Caco-2 (cell line): ENCODE measurements at regions of chr10 and their contacts with region 1.

Region 1: GRCh38 chr10:70549962-70550458 is 52.5 kb downstream of the PRF1 start:
- DNase-seq: peak; percentile 78 to 88
- H3K4me3 ChIP-seq: no peak overlapping the region
- H3K4me3 Mint-ChIP-seq: no peak overlapping the region
- H3K27ac Mint-ChIP-seq: no peak overlapping the region
- H3K4me1 ChIP-seq: peaks cover 5% of the 10 kb centered on the region; the same call in 1 of the 2 replicates
- H3K4me1 Mint-ChIP-seq: peaks cover 16% of the 10 kb centered on the region
- H3K27me3 ChIP-seq: no peaks in the 10 kb centered on the region
- H3K27me3 Mint-ChIP-seq: no peaks in the 10 kb centered on the region
- CTCF ChIP-seq: peak; percentile 99 to 100

Region 2: DNA sequence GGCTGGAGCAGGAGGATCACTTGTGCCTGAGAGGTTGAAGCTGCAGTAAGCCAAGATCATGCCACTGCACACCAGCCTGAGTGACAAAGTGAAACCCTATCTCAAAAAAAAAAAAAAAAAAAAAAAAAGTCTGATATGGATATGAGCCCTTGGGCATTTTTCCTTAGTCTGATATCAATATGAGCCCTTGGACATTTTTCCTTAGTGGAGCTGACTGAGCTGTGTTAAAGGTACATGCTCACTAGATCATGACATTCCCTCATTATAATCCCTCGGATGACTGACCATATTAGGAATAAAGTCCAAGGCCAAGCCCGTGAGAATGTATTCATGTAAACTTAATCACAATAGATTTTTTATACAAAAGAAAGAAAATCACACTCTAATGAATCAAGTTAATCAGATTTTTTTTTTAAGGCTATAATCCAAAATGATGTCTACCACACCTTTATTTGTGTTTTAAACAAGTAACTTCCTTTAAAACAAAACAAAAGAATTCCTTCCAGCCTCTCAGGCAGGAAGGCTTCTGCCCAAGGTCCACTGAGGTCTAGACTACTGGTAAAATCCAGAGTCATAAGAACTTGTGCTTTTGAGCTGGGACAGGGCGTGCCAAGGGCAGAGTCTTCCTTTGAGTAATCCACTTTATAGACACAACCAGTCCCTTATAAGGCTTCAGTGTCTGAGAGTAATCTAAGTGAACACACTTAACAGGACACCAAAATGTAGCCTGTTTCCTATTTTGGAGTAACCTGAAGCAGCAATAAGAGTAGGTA is 322.3 kb before region 1 on chr10:
- CTCF ChIA-PET with region 1: interaction called, 4 read pairs
- POLR2A ChIA-PET with region 1: no interaction called
- intact Hi-C with region 1: loop called (anchors 10 kb)
- DNase-seq: no peak
- H3K4me3 ChIP-seq: no peak overlapping the region
- H3K4me3 Mint-ChIP-seq: no peak overlapping the region
- H3K27ac Mint-ChIP-seq: no peak overlapping the region
- H3K4me1 ChIP-seq: peaks cover 16% of the 10 kb centered on the region
- H3K4me1 Mint-ChIP-seq: peaks cover 19% of the 10 kb centered on the region
- H3K27me3 ChIP-seq: no peaks in the 10 kb centered on the region
- H3K27me3 Mint-ChIP-seq: no peaks in the 10 kb centered on the region
- CTCF ChIP-seq: no peak

Region 3: GRCh38 chr10:70672165-70673042 is 122.4 kb after region 1 on chr10 and contains the start of gene ADAMTS14:
- CTCF ChIA-PET with region 1: interaction called, 4 read pairs
- POLR2A ChIA-PET with region 1: no interaction called
- intact Hi-C with region 1: loop called (anchors 10 kb)
- DNase-seq: peak in 1 of 2 experiments; percentile 45
- H3K4me3 ChIP-seq: peak within 1 kb of the TSS; percentile 38
- H3K4me3 Mint-ChIP-seq: peak within 1 kb of the TSS; percentile 68
- H3K27ac Mint-ChIP-seq: no peak within 1 kb of the TSS
- H3K4me1 ChIP-seq: peaks cover 3% of the 10 kb centered on the region; the same call in 1 of the 2 replicates
- H3K4me1 Mint-ChIP-seq: peaks cover 7% of the 10 kb centered on the region
- H3K27me3 ChIP-seq: peaks cover 7% of the 10 kb centered on the region
- H3K27me3 Mint-ChIP-seq: peaks cover 28% of the 10 kb centered on the region
- CTCF ChIP-seq: no peak
- total RNA-seq, gene ADAMTS14: not detected in 2 replicates

Region 4: DNA sequence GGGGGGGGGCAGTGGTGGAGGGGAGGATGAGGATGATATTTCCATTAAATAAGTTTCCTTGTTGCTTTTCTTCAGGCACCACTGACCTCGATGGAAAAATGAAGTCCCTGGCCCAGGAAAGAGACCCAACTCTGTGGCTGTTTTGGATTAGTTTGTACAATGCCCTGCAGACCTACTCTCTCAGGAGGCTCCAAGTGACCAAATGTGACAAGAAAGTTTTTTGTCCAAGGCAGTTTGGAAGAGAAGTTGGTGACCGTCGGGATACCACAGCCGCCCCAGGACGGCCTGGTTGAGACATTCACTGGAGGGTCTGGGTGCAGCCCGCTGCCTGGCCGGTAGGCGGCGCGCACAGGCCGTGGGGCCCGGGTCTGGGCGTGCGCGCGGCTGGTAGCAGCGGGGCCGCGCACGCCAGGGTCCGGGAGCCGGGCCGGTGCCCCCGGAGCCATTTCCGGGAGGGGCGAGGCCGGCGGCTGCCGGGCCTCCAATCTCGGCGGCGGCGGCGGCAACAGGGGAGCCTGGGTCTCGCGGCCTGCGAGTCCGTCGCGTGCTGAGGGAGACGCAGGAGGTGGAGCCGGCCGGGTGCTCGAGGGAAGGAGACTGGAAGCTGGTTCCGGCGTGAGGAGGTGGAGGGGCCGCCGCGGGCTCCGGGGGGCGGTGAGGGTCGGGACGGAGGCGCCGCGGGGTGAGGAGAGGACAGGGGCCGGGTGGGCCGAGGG is 265.7 kb after region 1 on chr10 and contains the start of gene SGPL1:
- CTCF ChIA-PET with region 1: no interaction called
- POLR2A ChIA-PET with region 1: no interaction called
- intact Hi-C with region 1: loop called (anchors 2 kb)
- DNase-seq: peak; percentile 92 to 98
- H3K4me3 ChIP-seq: peak within 1 kb of the TSS; percentile 93
- H3K4me3 Mint-ChIP-seq: peak within 1 kb of the TSS; percentile 96
- H3K27ac Mint-ChIP-seq: peak within 1 kb of the TSS; percentile 89
- H3K4me1 ChIP-seq: peaks cover 5% of the 10 kb centered on the region; the same call in 1 of the 2 replicates
- H3K4me1 Mint-ChIP-seq: peaks cover 7% of the 10 kb centered on the region
- H3K27me3 ChIP-seq: no peaks in the 10 kb centered on the region
- H3K27me3 Mint-ChIP-seq: no peaks in the 10 kb centered on the region
- CTCF ChIP-seq: peak; percentile 99 to 100
- total RNA-seq, gene SGPL1: 121 and 127 TPM in 2 replicates

Region 5: GRCh38 chr10:70880077-70880534 is 330.1 kb after region 1 on chr10:
- CTCF ChIA-PET with region 1: no interaction called
- POLR2A ChIA-PET with region 1: no interaction called
- intact Hi-C with region 1: loop called (anchors 1 kb)
- DNase-seq: peak; percentile 87 to 91
- H3K4me3 ChIP-seq: no peak overlapping the region
- H3K4me3 Mint-ChIP-seq: no peak overlapping the region
- H3K27ac Mint-ChIP-seq: no peak overlapping the region
- H3K4me1 ChIP-seq: no peaks in the 10 kb centered on the region
- H3K4me1 Mint-ChIP-seq: no peaks in the 10 kb centered on the region
- H3K27me3 ChIP-seq: no peaks in the 10 kb centered on the region
- H3K27me3 Mint-ChIP-seq: no peaks in the 10 kb centered on the region
- CTCF ChIP-seq: peak; percentile 98